ENCODE measurements at regions of chr14 and their contacts with region 1.

Region 1: GRCh38 chr14:22556990-22557623 is 31.9 kb downstream of the DAD1 start:
- DNase-seq: peak; percentile 88
- H3K4me3 Mint-ChIP-seq: peak overlapping the region; percentile 83
- H3K27ac Mint-ChIP-seq: peak overlapping the region; percentile 96
- H3K4me1 Mint-ChIP-seq: peaks cover 93% of the 10 kb centered on the region
- H3K27me3 Mint-ChIP-seq: peaks cover 2% of the 10 kb centered on the region

Region 2: DNA sequence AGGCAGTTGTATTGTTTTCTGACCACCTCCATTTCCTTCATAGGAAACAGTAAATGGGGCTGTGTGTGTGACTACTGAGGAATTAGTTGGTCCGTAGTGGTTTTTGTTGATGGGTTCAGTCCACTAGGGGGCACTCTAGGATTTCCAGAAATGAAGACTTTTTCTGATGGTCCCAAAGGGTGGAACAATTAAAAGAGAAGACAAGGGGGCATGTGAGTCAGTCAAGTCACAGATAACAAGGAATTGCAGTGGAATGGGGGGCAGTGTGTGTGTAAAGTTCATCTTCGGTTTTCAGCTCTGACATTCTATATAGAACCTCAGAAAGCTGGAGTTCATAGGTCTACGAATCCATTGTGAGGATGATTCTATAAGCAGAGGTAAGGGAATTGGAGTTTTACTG is 696.9 kb before region 1 on chr14:
- intact Hi-C with region 1: loop called (anchors 2 kb)
- DNase-seq: no peak
- H3K4me3 Mint-ChIP-seq: peak overlapping the region; percentile 48
- H3K27ac Mint-ChIP-seq: peak overlapping the region; percentile 64
- H3K4me1 Mint-ChIP-seq: peaks cover 10% of the 10 kb centered on the region
- H3K27me3 Mint-ChIP-seq: peaks cover 18% of the 10 kb centered on the region

Region 3: DNA sequence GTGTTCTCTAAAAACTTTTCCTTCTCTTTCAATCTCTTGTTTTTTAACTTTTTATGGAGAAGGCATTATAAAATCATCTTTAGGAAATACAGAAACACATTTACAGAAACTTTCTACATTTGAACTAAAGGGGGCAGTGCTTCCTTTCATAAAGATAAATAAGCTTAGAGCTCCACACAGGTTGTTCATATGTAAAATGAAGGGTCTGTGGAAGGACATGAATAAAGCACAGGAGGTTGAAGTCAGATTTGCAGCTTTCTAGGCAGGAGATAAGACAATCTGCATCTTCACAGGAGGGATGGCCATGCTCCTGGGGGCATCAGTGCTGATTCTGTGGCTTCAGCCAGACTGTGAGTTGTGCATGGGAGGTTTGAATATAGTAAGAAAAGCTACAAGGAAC is 394.1 kb before region 1 on chr14:
- intact Hi-C with region 1: loop called (anchors 5 kb)
- DNase-seq: no peak
- H3K4me3 Mint-ChIP-seq: peak overlapping the region; percentile 84
- H3K27ac Mint-ChIP-seq: peak overlapping the region; percentile 76
- H3K4me1 Mint-ChIP-seq: peaks cover 18% of the 10 kb centered on the region
- H3K27me3 Mint-ChIP-seq: no peaks in the 10 kb centered on the region

Region 4: GRCh38 chr14:22303589-22304195 is 253.4 kb before region 1 on chr14:
- intact Hi-C with region 1: loop called (anchors 5 kb)
- DNase-seq: no peak
- H3K4me3 Mint-ChIP-seq: peak overlapping the region; percentile 70
- H3K27ac Mint-ChIP-seq: peak overlapping the region; percentile 48
- H3K4me1 Mint-ChIP-seq: no peaks in the 10 kb centered on the region
- H3K27me3 Mint-ChIP-seq: no peaks in the 10 kb centered on the region

Region 5: DNA sequence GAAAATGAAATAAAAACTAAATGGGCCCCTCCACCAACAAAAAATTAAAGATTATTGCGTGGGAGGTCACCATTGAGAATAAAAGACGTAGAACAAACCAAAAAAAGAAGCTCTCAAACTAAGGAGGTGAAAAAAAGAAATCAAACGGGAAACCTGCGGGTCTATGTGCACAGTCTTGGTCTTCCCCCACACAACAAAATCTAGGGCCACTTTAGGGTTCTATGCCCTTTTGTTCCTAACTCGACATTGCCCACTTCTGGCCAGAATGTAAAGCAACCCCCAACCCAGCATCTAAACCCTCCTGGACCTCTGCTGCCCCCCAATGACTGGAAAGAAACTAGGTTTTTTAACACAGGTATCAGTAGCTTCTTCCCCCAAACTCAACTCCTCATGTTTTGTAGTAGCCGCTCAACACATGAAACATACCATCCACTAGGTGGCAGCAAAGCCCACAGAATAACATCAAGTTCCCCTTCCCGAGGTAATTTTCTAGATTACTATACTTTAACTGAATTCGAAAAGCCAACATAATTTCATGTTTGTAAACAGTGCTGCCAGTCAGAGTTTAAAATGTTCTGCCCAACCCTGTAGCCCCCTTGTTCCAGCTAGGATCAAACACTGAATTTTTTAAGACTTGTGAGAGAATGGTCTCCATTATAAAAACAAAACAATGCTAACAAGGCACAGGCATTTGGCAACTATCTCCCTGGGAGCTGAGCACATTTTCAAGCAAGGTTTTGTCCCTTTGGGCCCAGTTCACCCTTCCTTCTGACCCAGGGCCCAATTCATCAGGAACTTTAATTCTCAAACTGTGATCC is 13.2 kb after region 1 on chr14:
- intact Hi-C with region 1: loop called (anchors 1 kb)
- DNase-seq: peak; percentile 86
- H3K4me3 Mint-ChIP-seq: peak overlapping the region; percentile 85
- H3K27ac Mint-ChIP-seq: peak overlapping the region; percentile 90
- H3K4me1 Mint-ChIP-seq: peaks cover 71% of the 10 kb centered on the region
- H3K27me3 Mint-ChIP-seq: no peaks in the 10 kb centered on the region

Region 6: DNA sequence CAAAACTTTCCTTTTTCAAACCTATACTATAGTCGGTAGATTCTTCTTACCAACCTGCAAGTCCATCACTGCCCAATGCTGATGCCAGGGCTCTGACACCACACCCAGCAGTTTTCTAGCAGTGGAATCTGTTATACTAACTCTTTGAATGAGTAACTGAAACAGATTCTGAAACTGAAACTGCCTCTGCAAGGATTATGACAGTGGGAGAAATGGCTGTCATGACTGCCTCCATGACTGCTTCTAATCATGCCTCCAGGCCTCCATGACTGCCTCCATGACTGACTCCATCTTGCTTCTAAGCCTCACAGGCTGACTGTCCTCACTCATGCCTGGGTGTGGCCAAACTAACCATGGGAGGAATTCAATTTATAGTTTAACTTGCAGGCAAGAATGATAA is 179.9 kb after region 1 on chr14:
- intact Hi-C with region 1: loop called (anchors 1 kb)
- DNase-seq: peak; percentile 43
- H3K4me3 Mint-ChIP-seq: peak overlapping the region; percentile 53
- H3K27ac Mint-ChIP-seq: peak overlapping the region; percentile 96
- H3K4me1 Mint-ChIP-seq: peaks cover 27% of the 10 kb centered on the region
- H3K27me3 Mint-ChIP-seq: peaks cover 6% of the 10 kb centered on the region

Measured in activated T-helper 1 cell treated with anti-CD3 and anti-CD28 coated beads, Interleukin-12 subunit alpha, Interleukin-12 subunit beta, Interleukin-2, Interleukin-4 antibody, amounts not matched to agents 30 ng/mL and 10 ng/mL and 1 ng/mL, durations not matched to agents 14 hours and 24 hours and 36 hours (primary cell).